ENCODE measurements at regions of chr19 and their contacts with region 1.

Region 1: DNA sequence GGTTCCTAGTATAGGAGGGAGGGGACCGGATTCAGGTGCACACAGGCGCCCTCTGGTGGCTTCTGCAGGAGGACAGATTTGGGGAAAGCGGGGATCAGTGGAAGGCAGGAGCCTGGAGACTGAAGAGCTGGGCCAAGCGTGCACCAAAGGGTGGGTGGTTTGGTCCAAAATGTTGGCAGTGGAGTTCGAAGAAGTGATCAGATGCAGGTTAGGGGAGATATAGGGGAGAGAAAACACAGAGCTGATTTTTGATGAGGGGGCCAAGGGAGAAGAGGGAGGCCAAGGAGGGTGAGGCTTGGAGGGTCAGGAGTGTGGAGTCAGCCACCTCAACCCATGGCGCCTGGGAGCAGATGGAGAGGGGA is 6.8 kb upstream of the CARM1 start:
- DNase-seq: peak; percentile 86 to 92
- ATAC-seq: peak; percentile 76 to 88 (median 80)
- H3K4me3 ChIP-seq: peak overlapping the region; percentile 16
- H3K27ac ChIP-seq: no peak overlapping the region
- H3K4me1 ChIP-seq: no peaks in the 10 kb centered on the region
- H3K27me3 ChIP-seq: no peaks in the 10 kb centered on the region
- CTCF ChIP-seq: peak; percentile 84

Region 2: DNA sequence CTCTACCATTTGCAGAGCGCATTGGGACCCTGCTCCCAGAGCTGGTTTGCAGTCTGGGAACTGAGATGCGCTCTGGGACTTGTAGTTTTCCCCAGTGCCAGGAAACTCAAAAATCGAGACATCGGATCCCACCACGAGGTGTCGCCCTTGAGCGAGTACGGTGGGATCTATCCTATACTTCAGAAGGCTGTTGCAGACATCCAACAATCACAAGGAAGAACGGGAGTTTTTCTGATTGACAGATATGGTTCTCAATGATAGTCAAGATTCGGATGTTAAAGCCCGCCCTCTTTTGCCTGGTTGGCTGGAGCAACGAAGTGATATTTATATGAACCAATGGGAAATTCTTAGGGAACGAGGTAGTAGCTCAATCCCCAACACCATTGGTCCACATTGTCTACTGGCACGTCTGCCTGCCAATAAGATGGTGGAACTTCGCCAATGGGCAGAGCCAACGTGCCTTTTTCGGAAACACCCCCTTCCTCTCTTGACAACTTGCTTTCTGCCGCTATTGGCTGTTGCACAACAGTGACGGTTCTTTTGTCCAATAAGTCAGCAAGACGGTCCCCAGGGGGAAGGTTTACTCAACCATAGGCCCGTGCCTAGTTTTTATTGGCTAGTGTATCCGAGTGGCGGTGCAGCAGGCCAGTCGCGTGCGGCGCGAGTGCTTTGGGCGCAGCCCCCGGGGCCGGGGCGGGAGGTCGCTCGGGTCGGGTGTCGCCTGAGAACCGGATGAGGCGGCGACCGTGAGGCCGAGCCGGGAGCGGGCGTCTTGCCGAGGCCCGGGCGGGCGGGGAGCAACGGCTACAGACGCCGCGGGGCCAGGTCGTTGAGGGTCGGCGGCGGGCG is 146.9 kb before region 1 on chr19 and contains the start of gene DNM2:
- intact Hi-C with region 1: loop called (anchors 2 to 5 kb)
- DNase-seq: peak; percentile 98 to 99
- ATAC-seq: peak; percentile 90 to 94 (median 92)
- H3K4me3 ChIP-seq: peak within 1 kb of the TSS; percentile 95
- H3K27ac ChIP-seq: peak within 1 kb of the TSS; percentile 96
- H3K4me1 ChIP-seq: peaks cover 27% of the 10 kb centered on the region
- H3K27me3 ChIP-seq: no peaks in the 10 kb centered on the region
- CTCF ChIP-seq: peak; percentile 78
- total RNA-seq, gene DNM2: 117 to 143 (median 130) TPM

Region 3: DNA sequence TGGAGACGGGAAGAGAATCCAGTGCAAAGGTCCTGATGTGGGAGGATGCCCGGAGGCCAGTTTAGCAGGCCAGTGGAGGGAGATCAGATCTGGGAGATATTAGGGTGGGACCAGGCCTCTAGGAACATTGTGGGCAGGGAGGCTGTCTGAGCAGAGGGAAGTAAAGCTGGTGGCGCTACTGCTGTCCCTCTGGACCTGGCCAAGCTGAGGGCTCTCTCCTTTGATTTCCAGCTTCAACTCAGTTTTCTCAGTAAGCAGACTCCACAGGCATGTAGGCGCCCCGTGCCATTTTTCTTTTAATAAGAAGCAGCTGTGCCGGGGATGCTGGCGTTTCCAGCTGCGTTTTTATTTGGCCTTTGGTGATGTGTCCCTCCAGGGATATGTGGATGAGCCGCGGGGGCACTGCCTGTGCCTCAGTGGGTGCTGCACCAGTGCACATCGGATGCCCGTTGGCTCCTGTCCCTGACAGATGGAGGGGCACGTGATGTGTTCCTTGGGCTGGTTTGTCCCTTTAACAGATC is 139.9 kb before region 1 on chr19:
- intact Hi-C with region 1: loop called in 1 of 2 experiments (anchors 5 kb)
- DNase-seq: no peak
- ATAC-seq: no peak
- H3K4me3 ChIP-seq: no peak overlapping the region
- H3K27ac ChIP-seq: no peak overlapping the region
- H3K4me1 ChIP-seq: peaks cover 28% of the 10 kb centered on the region
- H3K27me3 ChIP-seq: no peaks in the 10 kb centered on the region
- CTCF ChIP-seq: no peak

Region 4: DNA sequence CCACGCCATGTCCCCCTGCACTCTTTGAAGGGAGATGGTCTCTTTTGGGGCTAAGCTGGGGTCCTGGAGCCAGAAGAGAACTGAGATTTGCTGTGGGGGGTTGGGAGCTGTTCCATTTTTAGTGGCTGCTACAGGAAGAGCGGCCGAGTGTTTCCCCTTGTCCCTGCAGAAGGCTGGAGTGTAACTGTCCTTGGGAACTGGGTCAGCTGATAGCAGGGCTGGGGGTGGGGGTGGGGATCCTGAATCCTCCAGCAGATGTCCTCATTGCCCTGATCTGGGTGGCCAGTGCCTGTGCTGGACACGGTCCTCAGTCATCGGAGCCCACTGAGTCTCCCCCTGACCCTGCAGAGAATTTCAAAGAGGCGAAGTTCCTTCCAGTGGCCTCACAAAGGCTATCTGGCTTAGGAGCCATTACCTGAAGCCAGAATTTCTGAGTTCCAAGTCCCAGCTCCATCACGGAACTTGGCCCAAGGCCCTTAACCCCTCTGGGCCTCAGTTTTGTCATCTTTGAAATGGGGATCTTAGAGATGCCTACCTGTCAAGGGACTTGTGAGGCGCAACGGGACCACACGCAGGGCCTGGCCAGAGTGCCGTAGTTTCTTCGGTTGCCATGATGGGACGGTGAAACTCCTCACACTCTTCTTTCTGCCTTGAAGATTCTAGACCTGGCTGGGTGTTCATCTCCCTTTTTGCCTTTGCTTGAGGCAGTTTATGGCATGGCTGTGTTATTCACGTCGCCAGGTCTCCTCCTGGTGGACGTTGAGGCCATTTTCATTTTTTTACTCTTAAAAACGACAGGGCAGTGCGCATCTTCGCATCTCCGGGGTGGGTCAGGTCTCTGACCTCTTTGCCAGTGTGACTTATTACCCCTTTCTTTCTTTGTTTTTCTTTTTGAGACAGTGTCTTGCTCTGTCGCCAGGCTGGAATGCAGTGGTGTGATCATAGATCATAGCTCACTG is 94.7 kb before region 1 on chr19:
- intact Hi-C with region 1: loop called (anchors 5 kb)
- DNase-seq: peak; percentile 70 to 82
- ATAC-seq: peak; percentile 89 to 91 (median 91)
- H3K4me3 ChIP-seq: peak overlapping the region; percentile 4
- H3K27ac ChIP-seq: peak overlapping the region; percentile 74
- H3K4me1 ChIP-seq: peaks cover 48% of the 10 kb centered on the region
- H3K27me3 ChIP-seq: no peaks in the 10 kb centered on the region
- CTCF ChIP-seq: peak; percentile 39